ENCODE measurements at regions of chr7 and their contacts with region 1.

Region 1: GRCh38 chr7:64625114-64626082 is 40.5 kb upstream of the ZNF107 start:
- DNase-seq: peak in 5 of 9 donors; percentile 17 to 33 (median 31)
- ATAC-seq: peak; percentile 65
- H3K4me3 ChIP-seq: no peak overlapping the region
- H3K4me3 Mint-ChIP-seq: no peak overlapping the region
- H3K27ac ChIP-seq: no peak overlapping the region
- H3K27ac Mint-ChIP-seq: peak overlapping the region in 1 of 9 donors; percentile 3
- H3K4me1 ChIP-seq: no peaks in the 10 kb centered on the region
- H3K4me1 Mint-ChIP-seq: no peaks in the 10 kb centered on the region
- H3K27me3 ChIP-seq: no peaks in the 10 kb centered on the region
- H3K27me3 Mint-ChIP-seq: no peaks in the 10 kb centered on the region

Region 2: GRCh38 chr7:63008366-63008765 is 1617.0 kb before region 1 on chr7:
- CTCF ChIA-PET with region 1: no interaction called
- POLR2A ChIA-PET with region 1: no interaction called
- intact Hi-C with region 1: loop called in 1 of 2 experiments (anchors 10 kb)
- DNase-seq: no peak
- ATAC-seq: no peak
- H3K4me3 ChIP-seq: no peak overlapping the region
- H3K4me3 Mint-ChIP-seq: no peak overlapping the region
- H3K27ac ChIP-seq: no peak overlapping the region
- H3K27ac Mint-ChIP-seq: no peak overlapping the region
- H3K4me1 ChIP-seq: no peaks in the 10 kb centered on the region
- H3K4me1 Mint-ChIP-seq: no peaks in the 10 kb centered on the region
- H3K27me3 ChIP-seq: no peaks in the 10 kb centered on the region
- H3K27me3 Mint-ChIP-seq: no peaks in the 10 kb centered on the region

Region 3: DNA sequence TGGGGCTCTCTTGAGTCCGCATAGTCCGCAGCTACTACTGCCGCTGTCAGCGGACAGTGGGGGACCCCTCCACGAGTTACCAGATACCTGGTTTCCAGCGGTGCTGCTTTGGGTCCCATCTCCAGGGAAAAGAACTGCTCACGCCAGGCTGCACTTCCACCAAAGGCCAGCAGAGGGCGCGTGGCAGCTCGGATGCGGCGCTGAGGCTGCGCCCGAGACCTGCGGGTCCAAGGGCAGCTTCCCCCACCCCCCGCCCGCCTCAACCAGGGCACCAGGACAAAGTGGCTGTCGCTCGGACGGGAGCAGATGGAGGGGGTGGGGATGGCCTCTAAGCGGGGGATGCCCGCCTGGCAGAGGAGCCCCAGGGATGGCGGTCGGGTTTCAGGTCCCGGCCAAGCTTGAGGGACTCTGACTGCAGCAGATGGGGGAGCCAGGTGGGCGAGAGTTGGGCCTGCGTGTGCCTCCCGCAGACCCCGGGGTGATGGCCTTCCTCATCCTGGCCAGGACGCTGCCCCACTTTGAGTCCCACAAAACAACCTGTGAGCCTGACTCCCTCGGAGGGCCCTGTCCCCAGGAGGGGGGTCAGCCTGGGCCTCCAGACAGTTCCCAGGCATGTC is 442.2 kb before region 1 on chr7:
- CTCF ChIA-PET with region 1: interaction called, 3 read pairs
- POLR2A ChIA-PET with region 1: no interaction called
- intact Hi-C with region 1: loop called in 1 of 2 experiments (anchors 10 kb)
- DNase-seq: peak in 4 of 9 donors; percentile 4 to 45 (median 27)
- ATAC-seq: peak; percentile 54
- H3K4me3 ChIP-seq: no peak overlapping the region
- H3K4me3 Mint-ChIP-seq: no peak overlapping the region
- H3K27ac ChIP-seq: no peak overlapping the region
- H3K27ac Mint-ChIP-seq: no peak overlapping the region
- H3K4me1 ChIP-seq: no peaks in the 10 kb centered on the region
- H3K4me1 Mint-ChIP-seq: no peaks in the 10 kb centered on the region
- H3K27me3 ChIP-seq: no peaks in the 10 kb centered on the region
- H3K27me3 Mint-ChIP-seq: peaks cover 0 to 17% (median 14%) of the 10 kb centered on the region in 5 donors

Region 4: DNA sequence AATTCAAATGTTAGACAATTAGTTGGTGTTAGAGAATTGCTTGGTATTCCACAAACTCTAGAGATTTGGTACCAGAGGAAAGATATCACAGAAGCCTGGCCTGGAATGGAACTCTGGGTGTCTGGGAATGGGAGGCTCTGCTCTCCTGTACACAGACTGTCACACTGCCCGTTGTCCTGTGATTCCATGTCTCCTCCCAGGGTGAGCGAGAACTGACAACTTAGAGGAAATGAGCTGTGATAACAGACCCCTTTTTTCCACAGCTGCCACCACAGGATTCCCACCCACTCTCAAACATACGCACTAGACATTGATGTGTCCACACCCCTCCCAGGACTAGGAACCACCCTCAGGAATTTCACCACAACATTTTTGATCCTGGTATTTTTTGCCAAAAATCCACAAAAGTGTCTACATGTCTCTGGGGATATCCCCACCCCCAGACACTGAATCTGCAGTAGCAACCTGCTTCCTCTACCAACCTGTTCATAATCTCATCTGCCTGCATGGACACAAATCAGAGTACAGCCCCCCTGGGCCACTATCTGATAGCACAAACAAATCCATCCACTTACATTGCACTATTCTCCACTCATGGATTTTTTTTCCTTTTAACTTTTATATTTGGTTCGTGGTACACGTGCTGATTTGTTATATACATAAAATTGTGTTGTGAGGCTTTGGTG is 282.4 kb after region 1 on chr7:
- CTCF ChIA-PET with region 1: no interaction called
- POLR2A ChIA-PET with region 1: no interaction called
- intact Hi-C with region 1: no loop called
- DNase-seq: no peak
- ATAC-seq: no peak
- H3K4me3 ChIP-seq: no peak overlapping the region
- H3K4me3 Mint-ChIP-seq: peak overlapping the region in 4 of 10 donors; percentile 10 to 65 (median 34)
- H3K27ac ChIP-seq: no peak overlapping the region
- H3K27ac Mint-ChIP-seq: peak overlapping the region in 6 of 9 donors; percentile 18 to 66 (median 52)
- H3K4me1 ChIP-seq: peaks cover 7 to 14% of the 10 kb centered on the region in 2 donors
- H3K4me1 Mint-ChIP-seq: peaks cover 35 to 76% (median 66%) of the 10 kb centered on the region in 7 donors
- H3K27me3 ChIP-seq: no peaks in the 10 kb centered on the region
- H3K27me3 Mint-ChIP-seq: no peaks in the 10 kb centered on the region

Region 5: GRCh38 chr7:66330961-66331360 is 1705.6 kb after region 1 on chr7:
- CTCF ChIA-PET with region 1: no interaction called
- POLR2A ChIA-PET with region 1: no interaction called
- intact Hi-C with region 1: no loop called
- DNase-seq: no peak
- ATAC-seq: no peak
- H3K4me3 ChIP-seq: no peak overlapping the region
- H3K4me3 Mint-ChIP-seq: no peak overlapping the region
- H3K27ac ChIP-seq: no peak overlapping the region
- H3K27ac Mint-ChIP-seq: no peak overlapping the region
- H3K4me1 ChIP-seq: no peaks in the 10 kb centered on the region
- H3K4me1 Mint-ChIP-seq: no peaks in the 10 kb centered on the region
- H3K27me3 ChIP-seq: no peaks in the 10 kb centered on the region
- H3K27me3 Mint-ChIP-seq: peaks cover 0 to 7% (median 0%) of the 10 kb centered on the region in 5 donors

Measured in naive thymus-derived CD4-positive, alpha-beta T cell (primary cell).